ENCODE measurements at regions of chr14 and their contacts with region 1.

Region 1: DNA sequence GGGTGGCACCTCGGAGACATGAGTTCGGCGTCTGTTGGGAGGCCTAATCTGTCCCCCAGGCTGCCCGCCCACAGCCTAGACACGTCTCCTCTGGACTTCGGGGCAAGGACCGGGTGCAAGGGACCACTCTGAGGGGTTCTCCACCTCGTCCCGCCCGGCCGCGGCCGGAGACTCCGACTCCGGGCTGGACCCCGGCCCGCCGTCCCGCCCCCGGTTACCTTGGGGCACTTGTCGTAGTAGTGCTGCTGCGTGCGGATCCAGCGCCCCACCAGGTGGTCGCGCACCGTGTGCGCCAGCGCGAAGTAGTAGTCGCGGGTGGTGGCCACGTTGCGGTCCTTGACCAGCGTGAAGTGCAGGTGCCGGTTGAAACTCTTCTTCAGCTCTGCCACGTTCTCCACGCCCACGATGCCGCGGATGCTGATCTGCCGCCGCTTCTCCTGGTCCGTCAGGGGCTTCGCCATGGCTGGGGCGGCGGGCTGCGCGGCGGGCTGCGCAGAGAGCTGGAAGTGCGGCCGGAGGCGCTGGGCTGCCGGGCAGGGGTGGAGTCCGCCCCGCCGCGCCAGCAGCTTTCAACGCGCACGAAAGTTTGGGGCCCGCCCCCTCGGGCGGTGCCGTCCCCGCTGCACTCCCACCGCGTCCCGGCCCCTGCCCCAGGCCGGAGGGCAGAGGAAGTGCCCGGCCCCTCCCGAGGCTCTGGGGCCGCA is at the start of gene PYGL:
- DNase-seq: peak; percentile 46
- ATAC-seq: peak; percentile 73
- H3K4me3 Mint-ChIP-seq: peak within 1 kb of the TSS; percentile 76
- H3K27ac Mint-ChIP-seq: peak within 1 kb of the TSS; percentile 43
- H3K4me1 Mint-ChIP-seq: peaks cover 9% of the 10 kb centered on the region
- H3K27me3 Mint-ChIP-seq: peaks cover 30% of the 10 kb centered on the region
- CTCF ChIP-seq: no peak
- total RNA-seq, gene PYGL: 1.6 to 1.7 TPM

Region 2: DNA sequence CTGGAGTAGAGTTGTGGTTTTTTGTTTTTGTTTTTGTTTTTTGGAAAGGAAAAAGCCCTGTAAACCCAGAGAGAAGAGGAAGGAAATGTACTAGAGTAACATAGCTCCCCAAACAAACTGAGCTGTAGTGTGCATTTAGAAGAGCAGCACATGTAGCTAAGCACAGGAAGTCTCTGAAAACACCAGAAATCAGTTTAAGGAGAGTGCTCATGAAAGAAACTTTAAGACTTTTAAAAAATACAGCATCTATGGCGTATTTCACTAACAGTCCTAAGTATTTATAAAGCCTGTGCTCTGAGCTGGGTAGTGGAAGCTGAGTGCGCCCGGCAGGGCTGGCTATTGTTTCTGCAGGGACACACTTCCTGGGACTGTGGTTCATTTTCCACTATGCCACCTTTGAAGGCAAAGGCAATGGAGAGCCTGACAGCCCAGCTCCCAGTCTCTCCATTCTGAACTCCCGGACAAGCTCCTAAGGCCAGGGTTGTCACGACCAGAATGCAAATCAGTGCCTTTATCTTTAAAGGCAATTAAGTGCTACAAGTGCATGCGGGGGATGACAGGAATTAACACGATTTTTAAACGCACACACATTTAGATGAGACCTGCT is 158.5 kb before region 1 on chr14:
- CTCF ChIA-PET with region 1: no interaction called
- POLR2A ChIA-PET with region 1: no interaction called
- intact Hi-C with region 1: no loop called
- DNase-seq: no peak
- ATAC-seq: no peak
- H3K4me3 Mint-ChIP-seq: no peak overlapping the region
- H3K27ac Mint-ChIP-seq: peak overlapping the region; percentile 77
- H3K4me1 Mint-ChIP-seq: peaks cover 89% of the 10 kb centered on the region
- H3K27me3 Mint-ChIP-seq: no peaks in the 10 kb centered on the region
- CTCF ChIP-seq: no peak

Region 3: DNA sequence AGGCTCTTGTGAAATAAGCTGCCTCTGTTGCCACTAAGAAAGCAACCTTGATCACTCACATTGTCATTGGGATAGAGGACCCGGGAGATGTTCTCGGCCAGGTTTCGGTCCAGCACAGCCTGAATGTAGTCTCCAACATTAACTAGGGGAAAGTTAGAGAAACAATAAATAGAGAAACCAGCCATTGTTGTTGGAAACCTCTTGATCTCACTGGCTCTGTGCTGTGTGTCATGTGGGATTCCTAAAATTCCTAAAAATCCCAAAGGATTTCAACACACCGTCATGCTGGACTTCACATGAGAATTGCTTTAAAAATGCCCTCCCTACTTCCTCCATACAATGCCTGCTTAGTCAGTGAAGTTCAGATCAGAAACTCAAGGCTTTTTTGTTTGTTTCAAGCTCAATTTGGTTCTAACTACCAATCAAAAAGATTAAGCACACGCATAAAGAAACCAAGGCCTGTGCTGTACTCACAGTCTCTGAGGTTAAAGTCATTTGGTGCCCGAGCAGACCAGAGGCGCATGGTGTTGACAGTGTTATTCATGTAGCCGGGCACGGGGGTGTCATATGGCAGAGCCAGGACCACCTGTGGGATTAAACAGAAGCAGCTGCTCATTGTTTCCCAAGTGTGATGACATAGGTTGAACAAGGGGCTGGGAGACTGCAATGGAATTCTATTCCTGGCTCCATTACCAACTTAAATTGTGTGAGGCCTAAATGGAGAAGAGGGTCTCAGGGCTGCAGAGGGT is 23.4 kb before region 1 on chr14:
- CTCF ChIA-PET with region 1: no interaction called
- POLR2A ChIA-PET with region 1: no interaction called
- intact Hi-C with region 1: no loop called
- DNase-seq: no peak
- ATAC-seq: no peak
- H3K4me3 Mint-ChIP-seq: no peak overlapping the region
- H3K27ac Mint-ChIP-seq: no peak overlapping the region
- H3K4me1 Mint-ChIP-seq: no peaks in the 10 kb centered on the region
- H3K27me3 Mint-ChIP-seq: peaks cover 3% of the 10 kb centered on the region
- CTCF ChIP-seq: no peak

Region 4: DNA sequence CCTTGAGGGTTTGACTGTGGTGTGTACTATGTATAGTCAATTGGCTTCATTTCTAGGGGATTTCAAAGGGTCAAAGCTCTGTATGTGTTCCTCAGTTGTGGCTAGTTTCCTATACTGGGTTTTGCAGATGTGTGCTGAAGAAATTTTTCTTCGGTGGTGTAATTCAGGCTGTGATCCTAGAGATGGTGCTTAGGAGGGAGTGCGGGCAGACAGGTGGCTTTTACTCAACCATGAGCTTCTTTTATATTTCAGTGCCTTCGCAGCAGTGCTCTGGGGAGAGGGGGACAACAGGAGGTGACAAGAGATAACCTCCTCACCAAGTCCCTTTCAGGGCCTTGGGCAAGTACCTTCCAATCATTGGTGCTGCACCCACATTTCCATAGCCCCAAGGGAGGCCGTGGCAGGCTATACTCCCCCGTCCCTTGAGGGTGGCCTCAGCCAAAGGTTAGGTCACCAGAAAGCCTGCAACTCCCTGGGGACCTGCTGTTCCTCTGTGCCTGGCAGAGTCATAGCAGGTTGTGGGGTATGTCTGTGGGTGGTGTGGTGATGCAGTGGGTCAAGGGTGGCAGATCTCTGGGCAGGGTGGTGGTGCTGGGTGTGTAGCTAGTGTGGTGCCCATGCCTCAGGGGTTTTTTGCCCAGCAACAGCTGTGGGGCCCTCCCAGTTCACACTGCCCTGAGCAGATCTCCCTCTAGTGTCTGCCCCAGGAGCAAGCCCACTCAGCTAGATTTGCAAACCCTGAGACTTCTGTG is 259.0 kb after region 1 on chr14:
- CTCF ChIA-PET with region 1: no interaction called
- POLR2A ChIA-PET with region 1: no interaction called
- intact Hi-C with region 1: loop called (anchors 10 kb)
- DNase-seq: no peak
- ATAC-seq: no peak
- H3K4me3 Mint-ChIP-seq: no peak overlapping the region
- H3K27ac Mint-ChIP-seq: no peak overlapping the region
- H3K4me1 Mint-ChIP-seq: no peaks in the 10 kb centered on the region
- H3K27me3 Mint-ChIP-seq: peaks cover 13% of the 10 kb centered on the region
- CTCF ChIP-seq: no peak

Measured in activated CD8-positive, alpha-beta T cell treated with anti-CD3 and anti-CD28 coated beads for 36 hours (primary cell).